Sigmoid colon (tissue), 7 donors: ENCODE measurements at regions of chr16 and their contacts with region 1.

Region 1: DNA sequence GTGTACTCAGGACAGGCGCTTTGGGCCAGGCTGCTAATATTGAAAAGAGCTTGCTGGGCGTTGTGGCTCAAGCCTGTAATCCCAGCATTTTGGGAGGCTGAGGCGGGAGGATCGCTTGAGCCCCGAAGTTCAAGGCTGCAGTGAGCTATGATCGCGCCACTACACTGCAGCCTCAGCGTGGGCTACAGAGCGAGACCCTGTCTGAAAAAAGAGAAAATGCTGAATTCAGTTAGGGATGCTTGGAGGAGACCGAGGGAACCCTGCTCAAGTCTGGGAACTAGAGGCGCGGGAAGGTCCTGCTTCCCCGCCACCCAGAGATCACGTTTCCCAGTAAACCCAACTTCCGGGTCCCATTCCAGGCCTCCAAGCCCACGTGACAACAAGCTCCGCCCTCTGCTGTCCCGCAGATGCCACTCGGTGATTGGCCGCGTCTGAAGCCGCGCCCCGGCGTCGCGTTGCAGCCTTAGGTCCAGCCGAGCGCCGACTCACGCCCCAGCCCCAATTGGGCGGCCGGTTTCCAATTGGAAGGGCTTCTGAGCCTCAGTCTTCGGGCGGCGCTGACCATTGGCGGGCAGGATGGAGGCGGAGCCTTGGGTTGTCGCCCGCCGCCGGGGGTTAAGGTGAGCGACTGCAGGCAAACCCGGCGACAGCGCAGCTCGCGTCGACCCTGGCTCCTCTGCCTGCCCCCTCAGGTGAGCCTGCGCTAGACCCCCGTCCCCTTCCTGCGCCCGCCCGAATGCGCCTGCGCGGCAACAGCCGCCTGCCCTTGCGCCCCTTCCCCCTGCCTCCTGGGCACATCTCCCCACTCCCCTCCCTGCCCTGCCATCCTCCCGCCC is at the start of gene PHKG2:
- DNase-seq: peak; percentile 100
- H3K4me3 ChIP-seq: peak within 1 kb of the TSS; percentile 79 to 99 (median 93)
- H3K27ac ChIP-seq: peak within 1 kb of the TSS; percentile 78 to 92 (median 84)
- H3K4me1 ChIP-seq: peaks cover 0 to 27% (median 15%) of the 10 kb centered on the region in 4 donors
- H3K27me3 ChIP-seq: no peaks in the 10 kb centered on the region
- CTCF ChIP-seq: no peak
- EP300 ChIP-seq: no peak
- POLR2A ChIP-seq: peak; percentile 21 to 37
- total RNA-seq, gene PHKG2: 20.1 to 28.5 (median 23.7) TPM

Region 2: GRCh38 chr16:30761928-30762810 is 14.2 kb after region 1 on chr16 and contains the starts of genes CFAP119 and RNF40:
- intact Hi-C with region 1: loop called (anchors 2 kb)
- DNase-seq: peak; percentile 99
- H3K4me3 ChIP-seq: peak within 1 kb of the TSS; percentile 75 to 95 (median 84)
- H3K27ac ChIP-seq: peak within 1 kb of the TSS; percentile 89 to 96 (median 92)
- H3K4me1 ChIP-seq: peaks cover 0 to 33% (median 31%) of the 10 kb centered on the region in 4 donors
- H3K27me3 ChIP-seq: no peaks in the 10 kb centered on the region
- CTCF ChIP-seq: no peak
- EP300 ChIP-seq: peak in 1 of 4 donors; percentile 31
- POLR2A ChIP-seq: peak; percentile 90 to 91
- total RNA-seq, gene CFAP119: 0.82 to 2.8 (median 1.7) TPM
- total RNA-seq, gene RNF40: 48.1 to 53.9 (median 49.6) TPM